Breast epithelium (tissue), 4 donors: ENCODE measurements at regions of chr11 and their contacts with region 1.

Region 1: GRCh38 chr11:2428322-2428795 is 16.0 kb downstream of the TRPM5 start:
- DNase-seq: peak; percentile 70 to 75
- H3K4me3 ChIP-seq: no peak overlapping the region
- H3K27ac ChIP-seq: no peak overlapping the region
- H3K4me1 ChIP-seq: no peaks in the 10 kb centered on the region
- H3K27me3 ChIP-seq: no peaks in the 10 kb centered on the region
- CTCF ChIP-seq: peak; percentile 62 to 98 (median 82)
- POLR2A ChIP-seq: no peak

Region 2: GRCh38 chr11:1515082-1516060 is 913.0 kb before region 1 on chr11:
- intact Hi-C with region 1: no loop called
- DNase-seq: peak; percentile 43 to 88
- H3K4me3 ChIP-seq: peak overlapping the region in 2 of 3 donors; percentile 18 to 53
- H3K27ac ChIP-seq: no peak overlapping the region
- H3K4me1 ChIP-seq: peaks cover 8 to 11% of the 10 kb centered on the region in 2 donors
- H3K27me3 ChIP-seq: no peaks in the 10 kb centered on the region
- CTCF ChIP-seq: peak; percentile 42 to 89 (median 88)
- POLR2A ChIP-seq: no peak

Region 3: DNA sequence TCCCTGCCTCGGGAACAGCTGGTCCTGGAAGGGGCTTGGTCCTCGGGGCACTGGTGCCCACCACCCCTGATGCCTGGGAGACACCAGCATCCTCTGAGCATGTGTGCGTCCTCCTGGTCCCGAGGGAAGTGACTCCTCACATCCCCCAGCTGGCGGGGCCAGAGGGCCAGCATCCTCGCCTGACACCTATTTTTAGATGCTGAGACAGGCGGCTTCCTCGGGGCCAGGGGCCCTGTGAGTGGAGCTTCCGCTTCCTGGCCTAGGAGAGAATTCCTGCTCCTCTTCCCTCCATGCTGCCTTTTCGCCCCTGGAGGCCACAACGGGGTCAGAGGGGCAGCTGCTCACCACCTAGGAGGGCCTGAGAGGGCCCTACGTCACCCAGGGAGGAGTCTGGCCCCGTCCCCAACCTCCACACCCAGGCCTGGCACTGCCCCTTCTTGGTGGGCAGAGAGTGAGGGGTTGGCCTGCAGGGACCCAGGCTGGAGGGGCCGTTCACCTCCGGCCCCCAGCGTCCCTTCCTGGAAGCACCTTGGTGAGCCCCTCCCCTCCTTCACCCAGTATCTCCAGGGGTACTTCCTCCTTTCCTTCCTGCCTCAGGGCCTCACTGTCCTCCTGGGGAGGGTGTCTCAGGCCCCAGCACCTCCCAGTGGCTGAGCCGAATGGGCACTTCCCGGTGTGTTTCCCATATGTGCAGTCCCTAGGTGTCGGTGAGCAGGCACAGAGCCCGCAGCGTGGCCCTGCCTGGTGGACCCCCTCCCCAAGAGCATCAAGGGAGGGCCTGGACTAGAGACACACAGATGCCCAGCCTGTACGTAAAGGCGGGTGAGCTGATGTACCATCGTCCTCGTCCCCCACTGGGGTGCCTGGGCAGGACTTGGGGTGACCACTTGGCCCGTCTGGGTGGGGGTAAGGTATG is 45.2 kb before region 1 on chr11:
- intact Hi-C with region 1: no loop called
- DNase-seq: no peak
- H3K4me3 ChIP-seq: peak overlapping the region in 2 of 3 donors; percentile 16 to 55
- H3K27ac ChIP-seq: peak overlapping the region; percentile 98 to 100
- H3K4me1 ChIP-seq: peaks cover 63 to 79% of the 10 kb centered on the region in 2 donors
- H3K27me3 ChIP-seq: no peaks in the 10 kb centered on the region
- CTCF ChIP-seq: no peak
- POLR2A ChIP-seq: no peak

Region 4: GRCh38 chr11:2892215-2893020 is 464.1 kb after region 1 on chr11:
- intact Hi-C with region 1: loop called (anchors 5 kb)
- DNase-seq: no peak
- H3K4me3 ChIP-seq: peak overlapping the region; percentile 36 to 76 (median 50)
- H3K27ac ChIP-seq: peak overlapping the region; percentile 31 to 87
- H3K4me1 ChIP-seq: peaks cover 8 to 20% of the 10 kb centered on the region in 2 donors
- H3K27me3 ChIP-seq: no peaks in the 10 kb centered on the region
- CTCF ChIP-seq: peak; percentile 88 to 93 (median 89)
- POLR2A ChIP-seq: no peak